CD4-positive, alpha-beta memory T cell (primary cell): ENCODE measurements at regions of chr4 and their contacts with region 1.

Region 1: GRCh38 chr4:6974138-6974848 is 64.7 kb downstream of the TBC1D14 start:
- DNase-seq: peak; percentile 73 to 83 (median 76)
- H3K4me3 ChIP-seq: no peak overlapping the region
- H3K4me3 Mint-ChIP-seq: no peak overlapping the region
- H3K27ac ChIP-seq: no peak overlapping the region
- H3K27ac Mint-ChIP-seq: peak overlapping the region; percentile 48 to 86 (median 72)
- H3K4me1 ChIP-seq: peaks cover 9% of the 10 kb centered on the region
- H3K4me1 Mint-ChIP-seq: peaks cover 18 to 35% (median 19%) of the 10 kb centered on the region in 4 donors
- H3K27me3 ChIP-seq: no peaks in the 10 kb centered on the region
- H3K27me3 Mint-ChIP-seq: no peaks in the 10 kb centered on the region

Region 2: DNA sequence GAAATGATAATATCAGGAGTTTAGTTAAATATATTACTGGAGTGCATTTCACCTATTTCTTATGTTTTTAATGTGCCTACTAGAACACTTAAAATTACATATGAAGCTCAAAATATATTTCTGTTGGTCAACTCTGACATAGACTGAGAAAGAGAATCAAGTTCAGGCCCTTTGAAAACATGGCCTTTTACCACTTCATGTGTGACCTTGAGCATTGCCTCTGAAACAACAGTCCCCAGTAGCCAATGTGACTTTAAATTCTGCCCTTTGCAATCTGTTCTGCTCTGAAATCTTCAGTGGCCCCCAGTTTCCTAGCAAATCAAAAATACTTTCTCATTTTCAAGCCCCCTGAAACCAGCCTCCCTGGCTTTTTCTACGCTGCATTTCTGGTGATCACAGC is 114.8 kb before region 1 on chr4:
- CTCF ChIA-PET with region 1: no interaction called
- POLR2A ChIA-PET with region 1: no interaction called
- intact Hi-C with region 1: no loop called
- DNase-seq: no peak
- H3K4me3 ChIP-seq: no peak overlapping the region
- H3K4me3 Mint-ChIP-seq: no peak overlapping the region
- H3K27ac ChIP-seq: no peak overlapping the region
- H3K27ac Mint-ChIP-seq: peak overlapping the region in 2 of 7 donors; percentile 36 to 49
- H3K4me1 ChIP-seq: peaks cover 14% of the 10 kb centered on the region
- H3K4me1 Mint-ChIP-seq: peaks cover 10 to 24% (median 13%) of the 10 kb centered on the region in 4 donors
- H3K27me3 ChIP-seq: no peaks in the 10 kb centered on the region
- H3K27me3 Mint-ChIP-seq: no peaks in the 10 kb centered on the region

Region 3: GRCh38 chr4:6917461-6918271 is 56.6 kb before region 1 on chr4:
- CTCF ChIA-PET with region 1: interaction called, 23 read pairs
- POLR2A ChIA-PET with region 1: interaction called, 8 read pairs
- intact Hi-C with region 1: loop called (anchors 5 kb)
- DNase-seq: peak in 1 of 5 donors; percentile 34
- H3K4me3 ChIP-seq: peak overlapping the region in 1 of 2 donors; percentile 47
- H3K4me3 Mint-ChIP-seq: peak overlapping the region; percentile 32 to 85 (median 66)
- H3K27ac ChIP-seq: peak overlapping the region; percentile 67
- H3K27ac Mint-ChIP-seq: peak overlapping the region; percentile 94 to 98 (median 96)
- H3K4me1 ChIP-seq: peaks cover 81% of the 10 kb centered on the region
- H3K4me1 Mint-ChIP-seq: peaks cover 54 to 89% (median 73%) of the 10 kb centered on the region in 4 donors
- H3K27me3 ChIP-seq: no peaks in the 10 kb centered on the region
- H3K27me3 Mint-ChIP-seq: no peaks in the 10 kb centered on the region

Region 4: GRCh38 chr4:6962211-6963041 is 11.9 kb before region 1 on chr4:
- CTCF ChIA-PET with region 1: interaction called, 14 read pairs
- POLR2A ChIA-PET with region 1: no interaction called
- intact Hi-C with region 1: no loop called
- DNase-seq: no peak
- H3K4me3 ChIP-seq: no peak overlapping the region
- H3K4me3 Mint-ChIP-seq: peak overlapping the region in 1 of 8 donors; percentile 26
- H3K27ac ChIP-seq: no peak overlapping the region
- H3K27ac Mint-ChIP-seq: peak overlapping the region in 4 of 7 donors; percentile 41 to 53 (median 45)
- H3K4me1 ChIP-seq: peaks cover 44% of the 10 kb centered on the region
- H3K4me1 Mint-ChIP-seq: peaks cover 33 to 77% (median 50%) of the 10 kb centered on the region in 4 donors
- H3K27me3 ChIP-seq: no peaks in the 10 kb centered on the region
- H3K27me3 Mint-ChIP-seq: no peaks in the 10 kb centered on the region

Region 5: DNA sequence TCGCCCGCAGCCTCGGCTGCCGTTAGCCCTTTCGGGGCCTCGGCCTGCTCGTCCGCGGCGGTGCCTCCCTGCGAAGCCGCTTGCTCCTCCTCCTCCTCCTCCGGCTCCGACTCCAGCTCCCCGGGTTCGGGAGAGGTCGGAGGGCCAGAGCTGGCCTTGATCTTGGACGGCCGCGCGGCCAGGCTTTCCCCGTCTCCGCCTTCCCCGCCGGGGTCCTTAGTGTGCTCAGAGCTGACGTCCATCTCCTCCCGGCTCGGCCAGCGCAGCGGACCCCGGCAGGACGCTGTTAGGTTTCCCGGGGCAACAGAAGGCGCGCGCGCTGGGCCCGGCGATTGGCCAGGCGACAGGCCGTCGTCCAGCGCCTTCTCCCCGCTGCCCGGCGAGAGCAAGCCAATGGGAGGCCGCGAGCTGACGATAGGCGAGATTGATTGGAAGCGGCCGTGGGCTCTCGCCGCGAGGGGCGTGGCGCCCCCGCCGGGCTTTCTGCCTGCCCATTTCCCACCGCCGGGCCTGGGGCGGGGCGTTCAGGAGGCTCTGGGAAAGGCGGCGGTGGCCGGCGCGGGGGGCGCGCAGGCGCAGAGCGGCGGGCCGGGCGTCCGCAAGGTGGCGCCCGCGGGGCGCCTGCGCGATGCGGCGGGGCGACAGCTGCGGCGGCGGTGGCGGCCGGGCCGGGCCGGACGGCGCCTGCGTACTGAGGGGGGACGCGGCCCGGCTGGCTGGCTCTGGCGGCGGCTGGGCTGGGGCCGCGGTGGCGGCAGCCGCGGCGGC is 68.6 kb after region 1 on chr4 and contains the start of gene TADA2B:
- CTCF ChIA-PET with region 1: interaction called, 3 read pairs
- POLR2A ChIA-PET with region 1: interaction called, 5 read pairs
- intact Hi-C with region 1: loop called (anchors 2 kb)
- DNase-seq: peak; percentile 90 to 94 (median 91)
- H3K4me3 ChIP-seq: peak within 1 kb of the TSS; percentile 83 to 91
- H3K4me3 Mint-ChIP-seq: peak within 1 kb of the TSS; percentile 89 to 97 (median 93)
- H3K27ac ChIP-seq: peak within 1 kb of the TSS; percentile 75
- H3K27ac Mint-ChIP-seq: peak within 1 kb of the TSS; percentile 81 to 95 (median 91)
- H3K4me1 ChIP-seq: peaks cover 45% of the 10 kb centered on the region
- H3K4me1 Mint-ChIP-seq: peaks cover 33 to 61% (median 40%) of the 10 kb centered on the region in 4 donors
- H3K27me3 ChIP-seq: no peaks in the 10 kb centered on the region
- H3K27me3 Mint-ChIP-seq: no peaks in the 10 kb centered on the region
- total RNA-seq, gene TADA2B: 46.4 to 49.0 TPM